ENCODE measurements at regions of chr10 and their contacts with region 1.

Region 1: GRCh38 chr10:51993475-51993874 is 294.1 kb upstream of the CSTF2T start:
- DNase-seq: no peak
- H3K4me3 ChIP-seq: no peak overlapping the region
- H3K27me3 ChIP-seq: no peaks in the 10 kb centered on the region
- CTCF ChIP-seq: no peak

Region 2: DNA sequence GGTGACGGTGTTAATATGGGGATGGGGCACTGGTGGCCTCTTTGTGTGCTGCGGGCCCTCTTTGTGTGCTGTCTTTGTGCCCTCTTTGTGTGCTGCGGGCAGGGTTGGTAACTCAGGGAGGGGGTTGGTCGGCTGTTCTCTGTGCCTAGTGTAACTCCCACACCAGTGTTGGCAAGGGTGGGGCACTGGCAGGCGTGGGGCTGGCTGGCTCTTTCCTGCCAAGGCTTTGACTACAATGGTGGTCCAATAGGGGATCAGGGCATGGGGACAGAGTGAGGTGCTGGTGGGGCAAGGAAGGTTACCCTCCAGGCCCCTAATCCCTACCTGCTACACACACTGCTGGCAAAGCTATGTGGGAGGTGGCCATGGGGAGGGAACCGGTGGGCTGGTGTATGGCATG is 10.5 kb before region 1 on chr10:
- CTCF ChIA-PET with region 1: no interaction called
- POLR2A ChIA-PET with region 1: no interaction called
- DNase-seq: no peak
- H3K4me3 ChIP-seq: no peak overlapping the region
- H3K27me3 ChIP-seq: no peaks in the 10 kb centered on the region
- CTCF ChIP-seq: no peak

Region 3: GRCh38 chr10:52004342-52004949 is 11.0 kb after region 1 on chr10:
- CTCF ChIA-PET with region 1: interaction called, 11 read pairs
- POLR2A ChIA-PET with region 1: no interaction called
- DNase-seq: no peak
- H3K4me3 ChIP-seq: no peak overlapping the region
- H3K27me3 ChIP-seq: no peaks in the 10 kb centered on the region
- CTCF ChIP-seq: peak; percentile 68

Region 4: GRCh38 chr10:52308251-52309031 is 315.0 kb after region 1 on chr10:
- CTCF ChIA-PET with region 1: no interaction called
- POLR2A ChIA-PET with region 1: no interaction called
- DNase-seq: no peak
- H3K4me3 ChIP-seq: peak overlapping the region; percentile 28
- H3K27me3 ChIP-seq: no peaks in the 10 kb centered on the region
- CTCF ChIP-seq: peak; percentile 68